ENCODE measurements at regions of chr5 and their contacts with region 1.

Region 1: DNA sequence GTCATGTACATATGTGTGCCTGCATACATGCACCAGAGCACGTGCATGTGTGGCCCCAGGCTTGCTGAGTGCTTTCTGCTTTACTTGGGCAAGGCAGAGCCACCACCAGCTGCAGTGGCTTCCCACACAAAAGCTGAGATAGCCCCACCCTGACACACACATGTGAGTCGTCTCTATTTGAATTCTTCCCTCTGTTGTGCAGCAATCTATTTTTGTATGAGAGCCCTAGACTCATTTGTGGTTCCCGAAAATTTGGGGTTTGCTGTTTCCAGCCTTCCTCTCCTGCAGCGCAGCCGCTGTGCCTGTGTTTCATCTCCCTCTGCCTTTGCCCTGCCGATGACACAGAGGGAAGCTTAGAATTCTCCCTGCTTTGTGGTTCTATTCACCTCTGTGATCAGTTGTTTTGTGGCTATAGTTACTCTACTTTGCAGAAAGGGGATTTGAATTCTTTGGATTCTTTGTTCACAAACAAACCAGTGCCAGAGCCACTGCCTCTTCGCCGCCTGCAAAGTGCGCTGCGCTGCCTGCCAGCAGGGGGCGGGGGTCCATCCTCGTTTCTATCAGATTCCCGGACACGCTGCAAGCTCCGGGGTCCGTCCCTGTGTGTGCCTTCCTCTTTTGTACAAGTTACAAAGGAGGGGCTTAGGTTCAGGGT is 95.8 kb upstream of the DAP start:
- DNase-seq: peak; percentile 71
- ATAC-seq: peak; percentile 68
- H3K4me3 ChIP-seq: peak overlapping the region in 1 of 3 experiments; percentile 24; a peak in 2 of 6 replicates
- H3K27ac ChIP-seq: peak overlapping the region; percentile 45
- H3K4me1 ChIP-seq: peaks cover 74% of the 10 kb centered on the region
- H3K27me3 ChIP-seq: no peaks in the 10 kb centered on the region
- CTCF ChIP-seq: peak; percentile 78
- EP300 ChIP-seq: no peak
- POLR2A ChIP-seq: no peak
- RAD21 ChIP-seq: peak; percentile 21

Region 2: GRCh38 chr5:10577371-10578292 is 279.2 kb before region 1 on chr5:
- CTCF ChIA-PET with region 1: no interaction called
- POLR2A ChIA-PET with region 1: no interaction called
- in situ Hi-C with region 1: no loop called
- intact Hi-C with region 1: no loop called
- DNase-seq: no peak
- ATAC-seq: no peak
- H3K4me3 ChIP-seq: no peak overlapping the region
- H3K27ac ChIP-seq: no peak overlapping the region
- H3K4me1 ChIP-seq: no peaks in the 10 kb centered on the region
- H3K27me3 ChIP-seq: peaks cover 0 to 3% of the 10 kb centered on the region in 2 experiments; a peak in 1 of 5 replicates
- CTCF ChIP-seq: no peak
- EP300 ChIP-seq: no peak
- POLR2A ChIP-seq: no peak
- RAD21 ChIP-seq: no peak

Region 3: DNA sequence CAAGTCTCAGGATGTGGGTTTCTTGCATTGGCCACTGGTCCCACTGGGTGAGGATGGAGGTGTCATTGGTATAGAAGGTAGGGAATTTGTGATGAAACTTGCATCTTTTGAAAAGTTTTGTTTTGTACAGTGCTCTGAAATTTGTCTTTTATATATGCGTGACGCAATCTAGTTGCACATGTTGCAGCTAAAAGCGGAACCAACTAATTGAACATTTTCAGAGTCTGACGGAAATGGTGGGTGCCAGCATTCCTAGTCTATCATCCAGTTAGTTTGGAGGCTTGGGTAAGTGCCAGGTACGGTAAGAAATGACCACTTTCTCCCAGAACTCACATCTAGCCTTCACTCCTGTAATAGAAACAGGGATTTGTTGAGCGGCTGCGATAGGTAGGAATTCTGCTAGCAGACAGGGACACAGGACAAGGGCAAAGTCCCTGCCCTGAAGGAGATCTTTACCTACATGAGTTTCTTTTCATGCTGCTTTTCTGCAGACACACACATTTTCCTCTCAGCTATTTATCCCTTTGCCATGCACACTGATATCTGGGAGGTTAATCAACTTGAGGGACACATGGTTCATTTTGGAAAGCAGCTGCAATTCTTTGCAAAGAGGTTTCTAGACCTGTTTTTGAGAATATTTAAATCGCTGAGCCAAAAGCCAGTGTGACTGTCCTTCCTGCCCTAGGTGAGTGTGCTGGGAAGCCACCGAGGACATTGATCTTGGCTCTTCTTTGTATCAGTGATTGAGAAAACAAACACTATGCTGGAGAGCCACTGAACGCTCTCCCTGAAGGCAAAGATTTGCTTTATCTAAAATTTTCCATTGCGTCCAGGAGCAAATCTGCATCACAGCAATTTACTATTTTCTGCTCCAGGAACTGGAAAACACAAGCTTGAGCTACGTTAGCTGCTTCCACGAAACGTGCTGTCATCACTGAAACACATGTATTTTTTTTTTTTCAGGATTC is 185.5 kb before region 1 on chr5:
- CTCF ChIA-PET with region 1: no interaction called
- POLR2A ChIA-PET with region 1: no interaction called
- in situ Hi-C with region 1: no loop called
- intact Hi-C with region 1: no loop called
- DNase-seq: no peak
- ATAC-seq: peak; percentile 50
- H3K4me3 ChIP-seq: no peak overlapping the region
- H3K27ac ChIP-seq: no peak overlapping the region
- H3K4me1 ChIP-seq: peaks cover 14% of the 10 kb centered on the region
- H3K27me3 ChIP-seq: no peaks in the 10 kb centered on the region; a peak in 1 of 5 replicates
- CTCF ChIP-seq: no peak
- EP300 ChIP-seq: no peak
- POLR2A ChIP-seq: no peak
- RAD21 ChIP-seq: no peak

Region 4: DNA sequence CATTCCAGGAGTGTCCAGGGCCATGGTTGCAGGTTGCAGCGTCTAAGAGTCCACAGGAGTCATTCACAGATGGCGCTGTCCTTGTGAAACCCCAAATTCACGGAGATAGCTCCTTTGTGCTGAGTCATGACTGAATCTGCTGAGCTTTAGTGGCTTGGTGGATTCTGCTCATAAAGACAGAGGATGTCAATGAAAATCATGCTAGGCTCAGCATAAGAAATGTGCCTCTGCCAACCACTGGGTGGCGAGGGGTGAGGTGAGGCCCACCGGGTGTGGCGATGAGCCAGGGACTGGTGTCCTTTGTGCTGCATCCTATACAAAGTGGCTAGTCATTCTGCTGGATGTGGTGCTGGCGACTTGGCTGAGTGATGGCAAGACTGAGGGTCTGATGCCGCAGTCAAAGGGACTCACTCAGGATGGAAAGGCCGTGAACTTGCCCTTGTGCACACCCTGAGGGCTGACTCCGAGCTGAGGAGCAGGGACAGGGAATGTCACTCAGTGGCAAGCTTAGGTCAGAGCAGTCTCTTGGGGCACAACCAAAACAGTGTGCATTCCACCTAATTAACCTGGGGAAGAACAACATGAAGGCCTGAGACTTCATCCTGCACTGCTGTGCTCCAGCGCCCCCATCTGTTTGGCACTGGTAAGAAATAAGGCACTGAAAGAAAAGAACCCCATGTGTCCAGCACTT is 167.3 kb before region 1 on chr5:
- CTCF ChIA-PET with region 1: no interaction called
- POLR2A ChIA-PET with region 1: no interaction called
- in situ Hi-C with region 1: loop called (anchors 5 kb)
- intact Hi-C with region 1: no loop called
- DNase-seq: no peak
- ATAC-seq: peak; percentile 75
- H3K4me3 ChIP-seq: no peak overlapping the region
- H3K27ac ChIP-seq: no peak overlapping the region
- H3K4me1 ChIP-seq: no peaks in the 10 kb centered on the region
- H3K27me3 ChIP-seq: no peaks in the 10 kb centered on the region
- CTCF ChIP-seq: peak; percentile 29; the same call in 1 of the 2 replicates
- EP300 ChIP-seq: no peak
- POLR2A ChIP-seq: no peak
- RAD21 ChIP-seq: no peak

Region 5: DNA sequence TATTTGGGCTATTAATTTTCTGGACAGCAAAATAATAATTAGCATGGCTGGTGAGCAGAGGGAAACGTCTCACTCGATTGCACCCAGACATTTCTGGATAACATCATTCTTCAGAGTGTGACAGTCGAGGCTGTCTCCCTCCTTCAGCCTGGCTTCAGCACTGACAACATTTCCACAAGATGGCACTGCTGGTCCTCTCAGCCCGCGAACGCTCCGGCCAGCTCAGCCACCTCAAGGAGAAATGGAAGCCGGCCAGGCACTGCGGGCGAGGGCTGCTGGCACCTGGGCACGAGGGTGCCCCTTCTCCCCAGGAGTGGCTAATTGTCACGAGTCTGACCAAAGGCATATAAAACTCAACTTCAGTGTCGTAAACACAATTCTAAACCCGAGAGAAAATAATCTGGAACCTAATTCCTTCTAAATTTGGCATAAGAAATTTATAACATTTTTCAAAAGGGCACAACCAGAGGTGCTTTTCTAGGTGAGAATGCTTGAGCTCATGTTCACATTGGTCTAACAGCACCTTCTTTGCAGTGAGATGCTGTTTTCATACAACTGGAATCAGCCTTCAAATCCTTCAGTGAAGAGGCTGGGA is 161.7 kb before region 1 on chr5:
- CTCF ChIA-PET with region 1: no interaction called
- POLR2A ChIA-PET with region 1: no interaction called
- in situ Hi-C with region 1: loop called (anchors 5 kb)
- intact Hi-C with region 1: loop called (anchors 5 kb)
- DNase-seq: peak; percentile 16
- ATAC-seq: peak; percentile 85
- H3K4me3 ChIP-seq: no peak overlapping the region
- H3K27ac ChIP-seq: no peak overlapping the region
- H3K4me1 ChIP-seq: no peaks in the 10 kb centered on the region
- H3K27me3 ChIP-seq: no peaks in the 10 kb centered on the region
- CTCF ChIP-seq: peak; percentile 78
- EP300 ChIP-seq: no peak
- POLR2A ChIP-seq: no peak
- RAD21 ChIP-seq: no peak

Region 6: GRCh38 chr5:10746711-10747110 is 110.1 kb before region 1 on chr5:
- CTCF ChIA-PET with region 1: no interaction called
- POLR2A ChIA-PET with region 1: no interaction called
- in situ Hi-C with region 1: no loop called
- intact Hi-C with region 1: loop called (anchors 5 kb)
- DNase-seq: no peak
- ATAC-seq: no peak
- H3K4me3 ChIP-seq: no peak overlapping the region
- H3K27ac ChIP-seq: no peak overlapping the region
- H3K4me1 ChIP-seq: peaks cover 49% of the 10 kb centered on the region
- H3K27me3 ChIP-seq: no peaks in the 10 kb centered on the region
- CTCF ChIP-seq: no peak
- EP300 ChIP-seq: no peak
- POLR2A ChIP-seq: no peak
- RAD21 ChIP-seq: no peak

Region 7: DNA sequence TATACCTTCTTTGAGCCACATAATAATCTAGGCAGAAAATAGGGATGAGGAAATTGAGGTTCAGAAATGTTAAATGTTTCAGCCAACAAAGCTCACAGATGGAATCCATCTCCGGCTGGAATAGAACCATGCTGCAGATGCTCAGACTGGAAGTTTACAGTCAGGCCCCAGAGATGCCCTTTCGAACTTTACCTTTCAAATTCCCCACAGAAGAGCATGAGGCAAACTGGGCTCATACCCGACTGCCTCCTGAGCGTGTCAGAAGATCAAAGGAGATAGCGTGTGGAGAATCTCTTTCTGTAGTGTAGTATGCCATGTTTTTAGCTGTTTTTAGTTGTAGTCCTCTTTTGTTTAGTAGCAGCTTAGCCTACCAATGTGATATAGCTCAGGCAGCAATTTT is 23.8 kb before region 1 on chr5:
- CTCF ChIA-PET with region 1: no interaction called
- POLR2A ChIA-PET with region 1: no interaction called
- in situ Hi-C with region 1: no loop called
- intact Hi-C with region 1: loop called (anchors 2 kb)
- DNase-seq: peak; percentile 85
- ATAC-seq: peak; percentile 99
- H3K4me3 ChIP-seq: no peak overlapping the region
- H3K27ac ChIP-seq: peak overlapping the region; percentile 51
- H3K4me1 ChIP-seq: peaks cover 37% of the 10 kb centered on the region
- H3K27me3 ChIP-seq: no peaks in the 10 kb centered on the region
- CTCF ChIP-seq: no peak
- EP300 ChIP-seq: peak in 1 of 2 experiments; percentile 61; a peak in 1 of 4 replicates
- POLR2A ChIP-seq: no peak
- RAD21 ChIP-seq: no peak

Region 8: DNA sequence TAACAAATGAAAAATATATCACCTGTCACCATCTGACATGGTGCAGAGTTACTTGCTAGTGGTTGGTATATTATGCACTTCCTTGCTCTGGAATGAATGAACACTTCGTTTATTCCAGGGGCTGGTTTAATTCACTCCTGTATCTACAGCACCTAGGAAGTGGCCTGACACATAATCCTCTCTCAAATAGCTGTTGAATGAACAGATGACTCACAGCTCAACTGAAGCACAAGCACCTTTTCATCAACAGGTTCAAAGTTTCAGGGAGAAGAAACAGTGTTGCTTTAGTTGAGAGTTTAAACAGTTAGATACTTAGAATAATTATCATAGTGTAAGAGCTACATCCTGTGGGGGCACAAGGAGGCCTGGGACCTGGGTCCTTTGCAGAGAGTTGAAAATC is 39.2 kb after region 1 on chr5:
- CTCF ChIA-PET with region 1: no interaction called
- POLR2A ChIA-PET with region 1: no interaction called
- in situ Hi-C with region 1: no loop called
- intact Hi-C with region 1: loop called (anchors 1 kb)
- DNase-seq: peak; percentile 35
- ATAC-seq: peak; percentile 72
- H3K4me3 ChIP-seq: no peak overlapping the region
- H3K27ac ChIP-seq: no peak overlapping the region
- H3K4me1 ChIP-seq: peaks cover 18% of the 10 kb centered on the region
- H3K27me3 ChIP-seq: no peaks in the 10 kb centered on the region; a peak in 1 of 5 replicates
- CTCF ChIP-seq: no peak
- EP300 ChIP-seq: peak in 1 of 2 experiments; percentile 45; a peak in 1 of 4 replicates
- POLR2A ChIP-seq: no peak
- RAD21 ChIP-seq: no peak

Measured in HepG2 (cell line).